PC-9 (cell line): ENCODE measurements at regions of chr17 and their contacts with region 1.

Region 1: DNA sequence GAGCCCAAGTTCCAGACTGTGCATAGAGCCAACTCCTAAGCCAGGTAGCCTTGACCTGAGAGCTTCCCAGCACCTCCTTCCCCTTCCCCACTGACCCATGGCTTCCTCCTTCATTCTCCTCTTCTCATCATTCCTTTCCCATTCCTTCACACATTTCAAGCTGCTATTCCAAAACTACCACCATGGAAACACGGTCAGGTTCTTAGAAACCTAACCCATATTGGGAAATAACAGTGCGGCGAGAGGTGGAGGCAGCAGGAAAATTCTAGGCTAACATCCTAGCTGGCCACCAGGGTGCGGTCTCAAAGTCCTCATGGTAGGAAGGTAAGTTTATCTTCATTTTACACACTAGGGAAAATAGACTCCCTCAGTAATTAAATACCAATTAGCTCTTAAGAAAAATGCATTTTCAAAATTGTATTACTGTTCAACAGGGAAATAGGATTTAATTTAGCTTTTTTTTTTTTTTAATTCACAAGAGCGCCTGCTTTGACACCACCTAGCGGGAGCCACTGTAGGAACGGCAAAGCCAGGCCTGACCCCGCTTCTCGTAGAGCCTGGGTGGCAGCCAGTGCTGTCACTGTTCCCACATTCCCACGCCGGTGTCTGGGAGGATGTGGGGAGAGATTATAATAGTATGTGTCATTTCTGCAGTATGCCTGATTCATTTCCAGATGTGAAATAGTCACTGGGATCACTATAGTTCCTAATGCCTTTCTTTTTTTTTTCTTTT is 14.0 kb upstream of the SPHK1 start:
- DNase-seq: peak; percentile 66 to 80
- H3K4me3 ChIP-seq: no peak overlapping the region
- H3K27ac ChIP-seq: no peak overlapping the region
- H3K4me1 ChIP-seq: no peaks in the 10 kb centered on the region
- H3K27me3 ChIP-seq: no peaks in the 10 kb centered on the region
- CTCF ChIP-seq: peak; percentile 59; the same call in 1 of the 2 replicates

Region 2: GRCh38 chr17:76353599-76354316 is 16.7 kb before region 1 on chr17 and contains the start of gene PRPSAP1:
- CTCF ChIA-PET with region 1: interaction called, 11 read pairs
- POLR2A ChIA-PET with region 1: no interaction called
- intact Hi-C with region 1: no loop called
- DNase-seq: peak; percentile 79 to 88
- H3K4me3 ChIP-seq: peak within 1 kb of the TSS; percentile 73
- H3K27ac ChIP-seq: peak within 1 kb of the TSS; percentile 75
- H3K4me1 ChIP-seq: no peaks in the 10 kb centered on the region
- H3K27me3 ChIP-seq: no peaks in the 10 kb centered on the region
- CTCF ChIP-seq: peak; percentile 49; the same call in 1 of the 2 replicates
- total RNA-seq, gene PRPSAP1: 63.3 and 73.0 TPM in 2 replicates

Region 3: GRCh38 chr17:76432712-76433336 is 62.4 kb after region 1 on chr17:
- CTCF ChIA-PET with region 1: no interaction called
- POLR2A ChIA-PET with region 1: no interaction called
- intact Hi-C with region 1: no loop called
- DNase-seq: no peak
- H3K4me3 ChIP-seq: no peak overlapping the region
- H3K27ac ChIP-seq: no peak overlapping the region
- H3K4me1 ChIP-seq: no peaks in the 10 kb centered on the region
- H3K27me3 ChIP-seq: no peaks in the 10 kb centered on the region
- CTCF ChIP-seq: peak; percentile 64

Region 4: GRCh38 chr17:76444518-76445311 is 74.3 kb after region 1 on chr17:
- CTCF ChIA-PET with region 1: interaction called, 10 read pairs
- POLR2A ChIA-PET with region 1: no interaction called
- intact Hi-C with region 1: no loop called
- DNase-seq: no peak
- H3K4me3 ChIP-seq: no peak overlapping the region
- H3K27ac ChIP-seq: peak overlapping the region; percentile 98
- H3K4me1 ChIP-seq: peaks cover 44% of the 10 kb centered on the region
- H3K27me3 ChIP-seq: no peaks in the 10 kb centered on the region
- CTCF ChIP-seq: no peak

Region 5: GRCh38 chr17:78197147-78197832 is 1826.9 kb after region 1 on chr17:
- CTCF ChIA-PET with region 1: interaction called, 10 read pairs
- POLR2A ChIA-PET with region 1: no interaction called
- intact Hi-C with region 1: no loop called
- DNase-seq: no peak
- H3K4me3 ChIP-seq: no peak overlapping the region
- H3K27ac ChIP-seq: no peak overlapping the region
- H3K4me1 ChIP-seq: no peaks in the 10 kb centered on the region; the same call in 1 of the 2 replicates
- H3K27me3 ChIP-seq: no peaks in the 10 kb centered on the region
- CTCF ChIP-seq: no peak